HepG2 (cell line): ENCODE measurements at regions of chr15 and their contacts with region 1.

Region 1: DNA sequence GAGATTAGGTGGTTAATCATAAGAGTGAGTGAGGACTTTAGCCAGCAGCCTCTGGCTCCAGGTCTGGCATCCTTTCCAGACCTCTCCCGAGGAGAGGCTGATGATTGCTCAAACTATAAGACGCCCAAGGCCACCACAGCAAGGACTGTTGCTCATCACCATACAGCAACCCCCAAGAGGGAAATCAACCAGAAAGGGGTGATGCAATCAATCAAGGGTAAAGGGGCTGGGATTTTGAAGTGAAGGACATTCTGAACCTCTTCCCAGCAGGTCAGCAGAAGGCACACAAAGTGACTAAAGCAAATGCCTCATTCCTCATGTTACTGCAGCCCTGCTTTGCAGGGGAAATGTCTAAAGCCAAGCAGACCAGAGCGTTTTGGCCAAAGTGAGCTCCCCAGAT is 247.3 kb upstream of the IGF1R start:
- DNase-seq: no peak
- ATAC-seq: no peak
- H3K4me3 ChIP-seq: no peak overlapping the region
- H3K27ac ChIP-seq: no peak overlapping the region
- H3K4me1 ChIP-seq: peaks cover 6% of the 10 kb centered on the region; the same call in 1 of the 2 replicates
- H3K27me3 ChIP-seq: peaks cover 0 to 6% of the 10 kb centered on the region in 2 experiments; a peak in 2 of 5 replicates
- CTCF ChIP-seq: no peak
- EP300 ChIP-seq: no peak
- POLR2A ChIP-seq: no peak
- RAD21 ChIP-seq: no peak

Region 2: DNA sequence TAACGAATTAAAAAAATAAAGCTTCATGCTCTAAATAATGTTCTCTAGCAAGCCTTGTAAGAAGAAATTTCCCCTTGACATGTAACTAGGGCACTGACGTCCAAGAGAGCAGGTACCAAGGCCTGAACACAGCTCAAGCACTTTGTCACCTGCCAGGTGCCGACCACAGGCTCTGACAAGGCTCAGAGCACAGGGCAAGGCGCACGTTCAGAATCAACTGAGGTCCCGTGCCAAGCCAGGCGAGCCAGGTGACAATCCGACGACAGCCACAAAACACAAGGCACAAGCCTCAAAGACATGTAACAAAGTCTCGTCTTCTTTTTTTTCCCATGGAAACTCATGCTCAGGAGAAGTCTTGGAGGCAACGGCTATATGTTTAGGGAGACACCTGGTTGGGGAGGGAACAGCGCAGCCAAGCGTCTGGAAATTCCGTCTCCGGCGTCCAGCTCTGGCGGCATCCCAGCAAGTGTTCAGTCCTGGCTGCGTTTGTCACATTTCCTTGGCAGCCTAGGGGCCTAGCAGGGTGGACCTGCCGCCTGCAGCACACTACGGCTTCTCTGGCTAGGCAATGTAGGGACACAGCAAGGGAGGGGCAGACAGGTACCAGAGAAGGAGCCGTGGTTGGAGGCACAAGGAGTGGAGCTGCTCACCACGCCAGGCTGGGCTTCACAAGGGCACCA is 1864.1 kb after region 1 on chr15:
- CTCF ChIA-PET with region 1: no interaction called
- POLR2A ChIA-PET with region 1: no interaction called
- in situ Hi-C with region 1: no loop called
- intact Hi-C with region 1: loop called (anchors 5 kb)
- DNase-seq: no peak
- ATAC-seq: no peak
- H3K4me3 ChIP-seq: no peak overlapping the region
- H3K27ac ChIP-seq: no peak overlapping the region
- H3K4me1 ChIP-seq: no peaks in the 10 kb centered on the region
- H3K27me3 ChIP-seq: no peaks in the 10 kb centered on the region
- CTCF ChIP-seq: no peak
- EP300 ChIP-seq: no peak
- POLR2A ChIP-seq: no peak
- RAD21 ChIP-seq: no peak